ENCODE measurements at regions of chr2 and their contacts with region 1.

Region 1: DNA sequence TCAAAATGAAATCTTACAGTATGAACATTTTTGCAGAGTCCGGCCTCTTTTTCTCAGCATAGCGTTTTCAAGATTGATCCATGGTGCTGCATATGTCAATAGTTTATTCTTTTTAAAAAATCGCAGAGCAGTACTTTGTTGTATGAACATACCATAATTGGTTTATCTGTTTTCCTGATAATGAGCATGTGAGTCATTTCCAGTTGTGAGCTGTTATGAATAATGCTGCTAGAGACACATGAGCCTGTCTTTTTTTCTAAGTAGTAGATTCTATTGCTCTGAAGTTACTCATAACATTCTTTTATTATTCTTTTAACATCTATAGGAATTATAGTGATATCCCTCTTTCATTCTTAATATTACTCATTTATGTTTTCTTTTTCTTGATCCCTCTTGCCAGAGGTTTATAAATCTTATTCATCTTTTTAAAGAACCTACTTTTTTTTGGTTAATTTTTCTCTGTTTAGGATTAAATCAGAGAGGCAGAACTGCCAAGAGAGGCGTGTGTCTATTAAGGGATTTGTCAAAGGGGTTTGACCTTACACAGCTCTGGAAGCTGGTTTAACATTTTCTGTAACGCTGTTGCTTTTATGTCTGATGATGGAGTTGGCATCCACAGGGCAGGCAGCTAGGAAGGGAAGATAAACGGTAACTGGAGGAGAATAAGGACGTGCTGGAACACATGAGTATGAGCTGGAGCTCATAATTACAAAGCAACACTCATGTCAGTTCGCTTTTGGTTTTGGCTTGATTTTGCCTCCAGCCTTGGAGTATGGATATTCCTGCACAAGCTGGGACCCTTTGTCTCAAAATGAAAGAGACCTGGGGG is 47.4 kb downstream of the MGAT5 start:
- DNase-seq: peak in 3 of 5 donors; percentile 22 to 40 (median 39)
- ATAC-seq: peak; percentile 84 to 92 (median 88)
- H3K4me3 ChIP-seq: peak overlapping the region in 6 of 12 donors; percentile 6 to 27 (median 12)
- H3K27ac ChIP-seq: peak overlapping the region; percentile 50 to 84 (median 71)
- H3K4me1 ChIP-seq: peaks cover 0 to 63% (median 31%) of the 10 kb centered on the region in 12 donors
- H3K27me3 ChIP-seq: no peaks in the 10 kb centered on the region
- CTCF ChIP-seq: no peak
- POLR2A ChIP-seq: no peak

Region 2: DNA sequence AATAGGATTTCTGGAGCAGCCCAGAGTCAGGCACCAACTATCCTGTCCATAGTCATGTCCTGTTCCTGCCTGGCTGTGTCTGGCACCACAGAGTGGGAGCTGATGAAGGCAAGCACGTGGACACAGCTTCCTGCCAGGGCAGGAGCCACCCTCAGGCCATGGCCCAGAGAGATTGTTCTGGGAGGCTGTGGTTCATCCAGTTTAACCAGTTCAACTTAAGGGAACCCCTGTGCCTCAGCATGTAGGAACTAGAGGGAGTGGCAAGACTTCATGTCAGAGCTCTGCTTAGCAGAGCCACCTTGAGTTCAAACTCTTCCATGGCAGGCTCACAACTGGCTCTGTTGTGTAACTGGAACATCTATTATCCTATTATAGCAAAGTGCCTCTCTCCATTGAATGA is 659.8 kb before region 1 on chr2:
- intact Hi-C with region 1: no loop called
- DNase-seq: peak in 2 of 5 donors; percentile 10 to 17
- ATAC-seq: peak; percentile 52 to 84 (median 62)
- H3K4me3 ChIP-seq: no peak overlapping the region
- H3K27ac ChIP-seq: no peak overlapping the region
- H3K4me1 ChIP-seq: peaks cover 0 to 17% (median 0%) of the 10 kb centered on the region in 12 donors
- H3K27me3 ChIP-seq: no peaks in the 10 kb centered on the region
- CTCF ChIP-seq: peak in 3 of 12 donors; percentile 4 to 23 (median 16)
- POLR2A ChIP-seq: no peak

Region 3: GRCh38 chr2:134320930-134321329 is 19.6 kb after region 1 on chr2:
- intact Hi-C with region 1: loop called in 1 of 10 experiments (anchors 2 kb)
- DNase-seq: no peak
- ATAC-seq: no peak
- H3K4me3 ChIP-seq: no peak overlapping the region
- H3K27ac ChIP-seq: no peak overlapping the region
- H3K4me1 ChIP-seq: peaks cover 5 to 51% (median 31%) of the 10 kb centered on the region in 12 donors
- H3K27me3 ChIP-seq: no peaks in the 10 kb centered on the region
- CTCF ChIP-seq: no peak
- POLR2A ChIP-seq: no peak

Region 4: GRCh38 chr2:134338208-134338607 is 36.9 kb after region 1 on chr2:
- intact Hi-C with region 1: no loop called
- DNase-seq: peak in 1 of 5 donors; percentile 41
- ATAC-seq: peak in 2 of 4 donors; percentile 33 to 49
- H3K4me3 ChIP-seq: no peak overlapping the region
- H3K27ac ChIP-seq: peak overlapping the region in 4 of 12 donors; percentile 1 to 81 (median 32)
- H3K4me1 ChIP-seq: peaks cover 0 to 61% (median 21%) of the 10 kb centered on the region in 12 donors
- H3K27me3 ChIP-seq: no peaks in the 10 kb centered on the region
- CTCF ChIP-seq: no peak
- POLR2A ChIP-seq: no peak

Region 5: GRCh38 chr2:134402410-134402809 is 101.1 kb after region 1 on chr2:
- intact Hi-C with region 1: loop called in 1 of 10 experiments (anchors 5 kb)
- DNase-seq: peak in 3 of 5 donors; percentile 51 to 59 (median 53)
- ATAC-seq: peak; percentile 70 to 80 (median 72)
- H3K4me3 ChIP-seq: no peak overlapping the region
- H3K27ac ChIP-seq: peak overlapping the region in 11 of 12 donors; percentile 50 to 83 (median 74)
- H3K4me1 ChIP-seq: peaks cover 7 to 58% (median 30%) of the 10 kb centered on the region in 12 donors
- H3K27me3 ChIP-seq: no peaks in the 10 kb centered on the region
- CTCF ChIP-seq: no peak
- POLR2A ChIP-seq: no peak